OCI-LY7 (cell line): ENCODE measurements at regions of chr17 and their contacts with region 1.

Region 1: GRCh38 chr17:76121932-76122430 is 18.4 kb upstream of the EXOC7 start:
- DNase-seq: no peak
- H3K4me3 ChIP-seq: peak overlapping the region; percentile 17
- H3K27ac ChIP-seq: no peak overlapping the region
- H3K4me1 ChIP-seq: peaks cover 22% of the 10 kb centered on the region
- CTCF ChIP-seq: no peak

Region 2: DNA sequence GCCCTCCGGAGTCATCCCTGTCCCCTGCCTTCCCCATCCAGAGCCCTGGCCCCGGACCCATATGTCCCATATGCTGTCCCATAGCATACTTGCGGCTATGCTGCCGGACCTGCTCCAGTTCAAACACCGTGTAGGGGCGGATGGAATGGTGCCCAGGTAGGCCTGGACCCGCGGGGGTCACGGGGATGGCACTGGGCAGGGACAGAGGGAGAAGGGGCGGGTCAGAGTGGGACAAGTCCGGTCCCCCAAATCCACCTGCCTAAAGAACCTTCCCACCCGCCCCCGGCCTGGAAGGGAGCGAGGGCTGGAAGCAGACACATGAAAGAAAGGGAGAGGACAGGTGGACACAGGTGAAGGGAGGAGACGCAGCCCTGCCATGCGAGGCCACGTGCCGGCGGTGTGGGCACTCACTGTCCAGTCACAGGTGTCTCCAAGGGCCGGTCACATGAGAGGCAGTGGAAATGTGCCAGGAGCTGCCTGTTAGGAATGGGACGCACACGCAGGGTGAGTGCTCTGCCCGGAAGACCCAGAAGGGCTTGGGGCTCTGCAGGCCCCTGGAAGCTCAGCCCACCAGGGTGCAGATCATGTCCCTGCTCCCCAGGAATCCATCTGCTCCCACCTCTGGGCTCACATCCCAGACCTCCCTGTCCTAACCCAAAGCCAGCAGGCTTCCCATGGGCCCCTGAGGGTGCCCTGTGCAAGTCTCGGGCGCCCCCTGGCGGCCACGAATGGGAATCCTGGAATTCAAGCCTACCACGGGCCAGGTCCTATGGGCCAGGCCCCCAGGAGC is 157.2 kb after region 1 on chr17:
- CTCF ChIA-PET with region 1: interaction called, 11 read pairs
- POLR2A ChIA-PET with region 1: interaction called, 3 read pairs
- intact Hi-C with region 1: loop called (anchors 1 kb)
- DNase-seq: peak; percentile 88
- H3K4me3 ChIP-seq: no peak overlapping the region
- H3K27ac ChIP-seq: no peak overlapping the region
- H3K4me1 ChIP-seq: peaks cover 12% of the 10 kb centered on the region
- CTCF ChIP-seq: peak; percentile 100

Region 3: DNA sequence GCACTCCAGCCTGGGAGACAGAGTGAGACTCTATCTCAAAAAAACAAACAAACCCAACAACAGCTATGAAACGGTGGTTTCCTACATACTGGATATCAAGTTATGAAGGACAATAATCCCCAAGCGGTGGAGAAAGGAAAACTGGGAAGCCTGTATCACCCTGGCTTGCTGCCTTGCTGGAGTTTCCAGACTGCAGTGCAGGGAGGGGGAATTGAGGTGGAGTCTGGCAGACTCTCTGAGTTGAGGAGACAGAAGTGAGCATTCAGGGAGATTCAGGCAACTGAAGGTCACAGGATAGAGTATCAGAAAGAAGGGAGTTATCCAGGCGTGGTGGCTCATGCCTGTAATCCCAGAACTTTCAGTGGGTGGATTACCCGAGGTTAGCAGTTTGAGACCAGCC is 174.2 kb after region 1 on chr17:
- CTCF ChIA-PET with region 1: interaction called, 5 read pairs
- POLR2A ChIA-PET with region 1: interaction called, 3 read pairs
- intact Hi-C with region 1: loop called (anchors 1 kb)
- DNase-seq: no peak
- H3K4me3 ChIP-seq: no peak overlapping the region
- H3K27ac ChIP-seq: no peak overlapping the region
- H3K4me1 ChIP-seq: no peaks in the 10 kb centered on the region
- CTCF ChIP-seq: no peak

Region 4: GRCh38 chr17:76337413-76337777 is 215.4 kb after region 1 on chr17:
- CTCF ChIA-PET with region 1: no interaction called
- POLR2A ChIA-PET with region 1: no interaction called
- intact Hi-C with region 1: no loop called
- DNase-seq: no peak
- H3K4me3 ChIP-seq: no peak overlapping the region
- H3K27ac ChIP-seq: no peak overlapping the region
- H3K4me1 ChIP-seq: no peaks in the 10 kb centered on the region
- CTCF ChIP-seq: no peak